Mammary epithelial cell (primary cell): ENCODE measurements at regions of chr17 and their contacts with region 1.

Region 1: GRCh38 chr17:41959336-41960095 is 7.1 kb upstream of the CNP start:
- DNase-seq: peak; percentile 55
- H3K4me3 ChIP-seq: no peak overlapping the region
- H3K27ac ChIP-seq: no peak overlapping the region
- H3K4me1 ChIP-seq: peaks cover 10% of the 10 kb centered on the region
- H3K27me3 ChIP-seq: no peaks in the 10 kb centered on the region
- CTCF ChIP-seq: peak; percentile 50 to 65

Region 2: DNA sequence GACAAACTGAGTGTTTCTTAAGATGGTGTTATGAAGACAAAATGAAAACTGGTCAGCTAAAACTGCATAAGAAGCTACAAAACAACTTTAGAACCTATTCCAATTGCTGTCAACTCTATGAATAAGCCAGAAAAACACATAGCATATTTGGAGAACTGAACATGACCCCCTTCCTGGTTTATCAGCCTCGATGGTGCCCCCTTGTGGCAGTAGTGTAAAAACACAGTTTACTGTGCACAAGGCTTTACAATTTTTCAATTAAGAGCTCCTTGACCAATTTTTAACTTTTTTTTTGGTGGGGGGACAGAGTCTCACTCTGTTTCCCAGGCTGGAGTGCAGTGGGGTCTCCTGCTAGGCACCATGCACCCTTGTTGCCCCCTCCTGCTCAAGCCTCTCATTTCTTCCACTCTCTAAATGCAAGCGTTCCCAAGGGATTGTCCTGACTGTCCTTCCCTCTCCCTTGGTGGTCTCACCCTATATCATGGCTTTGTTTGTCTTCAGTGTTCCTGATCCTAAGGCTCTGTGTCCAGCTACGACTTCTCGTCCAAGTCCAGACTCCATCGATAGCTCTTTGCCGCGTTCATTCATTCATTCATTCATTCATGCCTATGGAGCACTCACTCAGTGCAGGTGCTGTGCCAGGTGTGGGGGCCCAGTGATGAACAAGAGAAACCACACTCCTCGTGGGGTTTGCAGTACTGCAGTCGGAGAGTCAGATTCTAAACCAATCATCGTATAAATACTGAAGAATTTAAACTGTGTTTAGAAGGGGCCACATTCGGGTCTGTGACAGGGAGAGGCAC is 263.4 kb before region 1 on chr17:
- CTCF ChIA-PET with region 1: interaction called, 10 read pairs
- dilution Hi-C with region 1: no loop called
- in situ Hi-C with region 1: no loop called
- intact Hi-C with region 1: no loop called
- DNase-seq: peak; percentile 58
- H3K4me3 ChIP-seq: no peak overlapping the region
- H3K27ac ChIP-seq: no peak overlapping the region
- H3K4me1 ChIP-seq: peaks cover 2% of the 10 kb centered on the region
- H3K27me3 ChIP-seq: no peaks in the 10 kb centered on the region
- CTCF ChIP-seq: peak; percentile 80 to 89

Region 3: GRCh38 chr17:41717408-41718286 is 241.9 kb before region 1 on chr17:
- CTCF ChIA-PET with region 1: no interaction called
- dilution Hi-C with region 1: loop called (anchors 5 kb)
- in situ Hi-C with region 1: no loop called
- intact Hi-C with region 1: no loop called
- DNase-seq: peak; percentile 85
- H3K4me3 ChIP-seq: peak overlapping the region in 2 of 3 experiments; percentile 2 to 6
- H3K27ac ChIP-seq: peak overlapping the region; percentile 67
- H3K4me1 ChIP-seq: peaks cover 16% of the 10 kb centered on the region
- H3K27me3 ChIP-seq: no peaks in the 10 kb centered on the region
- CTCF ChIP-seq: no peak

Region 4: DNA sequence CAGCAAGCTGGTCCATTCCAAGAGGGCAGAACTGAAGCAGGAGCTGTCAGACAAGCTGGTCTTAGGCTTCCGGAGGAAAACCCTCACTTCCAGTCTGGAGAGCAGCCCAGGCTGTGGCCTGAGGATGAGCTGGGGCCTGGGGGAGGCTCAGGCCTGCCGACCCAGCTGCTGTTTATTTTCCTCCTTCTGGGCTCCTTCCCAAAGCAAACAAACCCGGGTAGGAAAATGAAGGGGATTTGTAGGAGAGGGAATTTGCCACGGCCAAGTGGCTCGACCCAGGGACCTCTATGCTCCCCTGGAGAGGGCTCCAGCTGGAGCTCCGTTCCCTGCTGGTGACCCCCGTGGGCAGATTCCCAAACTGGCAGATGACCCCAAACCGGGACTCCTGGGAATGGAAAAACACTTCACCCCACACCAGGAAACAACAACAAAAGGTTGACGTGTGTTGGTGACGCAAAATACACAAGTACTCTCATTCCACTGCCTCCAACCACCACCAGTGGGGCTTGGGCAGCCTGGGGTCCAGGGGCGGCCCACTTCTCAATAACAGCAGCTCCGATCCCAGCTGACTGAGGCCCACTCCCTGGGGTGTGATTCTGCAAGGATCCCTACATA is 181.8 kb before region 1 on chr17:
- CTCF ChIA-PET with region 1: no interaction called
- dilution Hi-C with region 1: no loop called
- in situ Hi-C with region 1: no loop called
- intact Hi-C with region 1: no loop called
- DNase-seq: peak; percentile 65
- H3K4me3 ChIP-seq: no peak overlapping the region
- H3K27ac ChIP-seq: peak overlapping the region; percentile 37
- H3K4me1 ChIP-seq: peaks cover 61% of the 10 kb centered on the region
- H3K27me3 ChIP-seq: no peaks in the 10 kb centered on the region
- CTCF ChIP-seq: no peak

Region 5: DNA sequence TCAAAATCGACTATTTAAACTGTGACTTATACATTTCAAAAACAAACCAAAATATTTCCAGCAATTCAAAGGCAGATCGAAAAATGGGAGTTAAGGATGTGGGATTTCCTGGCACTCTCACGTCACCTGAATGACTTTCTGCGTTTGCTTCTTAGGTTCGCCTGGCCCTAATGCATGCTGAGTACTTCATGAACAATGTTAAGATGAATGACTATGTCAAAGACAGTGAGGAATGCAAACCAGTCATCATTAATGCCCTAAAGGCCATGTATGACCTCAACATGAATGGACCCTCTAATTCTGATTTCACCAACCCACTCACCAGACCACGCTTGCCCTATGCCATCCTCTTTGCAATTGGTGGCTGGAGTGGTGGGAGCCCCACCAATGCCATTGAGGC is 114.5 kb before region 1 on chr17:
- CTCF ChIA-PET with region 1: no interaction called
- dilution Hi-C with region 1: loop called (anchors 5 kb)
- in situ Hi-C with region 1: no loop called
- intact Hi-C with region 1: no loop called
- DNase-seq: no peak
- H3K4me3 ChIP-seq: no peak overlapping the region
- H3K27ac ChIP-seq: no peak overlapping the region
- H3K4me1 ChIP-seq: no peaks in the 10 kb centered on the region
- H3K27me3 ChIP-seq: no peaks in the 10 kb centered on the region
- CTCF ChIP-seq: no peak

Region 6: GRCh38 chr17:41894791-41895331 is 64.7 kb before region 1 on chr17:
- CTCF ChIA-PET with region 1: no interaction called
- dilution Hi-C with region 1: loop called (anchors 5 kb)
- in situ Hi-C with region 1: no loop called
- intact Hi-C with region 1: loop called (anchors 10 kb)
- DNase-seq: no peak
- H3K4me3 ChIP-seq: no peak overlapping the region
- H3K27ac ChIP-seq: no peak overlapping the region
- H3K4me1 ChIP-seq: no peaks in the 10 kb centered on the region
- H3K27me3 ChIP-seq: no peaks in the 10 kb centered on the region
- CTCF ChIP-seq: no peak

Region 7: DNA sequence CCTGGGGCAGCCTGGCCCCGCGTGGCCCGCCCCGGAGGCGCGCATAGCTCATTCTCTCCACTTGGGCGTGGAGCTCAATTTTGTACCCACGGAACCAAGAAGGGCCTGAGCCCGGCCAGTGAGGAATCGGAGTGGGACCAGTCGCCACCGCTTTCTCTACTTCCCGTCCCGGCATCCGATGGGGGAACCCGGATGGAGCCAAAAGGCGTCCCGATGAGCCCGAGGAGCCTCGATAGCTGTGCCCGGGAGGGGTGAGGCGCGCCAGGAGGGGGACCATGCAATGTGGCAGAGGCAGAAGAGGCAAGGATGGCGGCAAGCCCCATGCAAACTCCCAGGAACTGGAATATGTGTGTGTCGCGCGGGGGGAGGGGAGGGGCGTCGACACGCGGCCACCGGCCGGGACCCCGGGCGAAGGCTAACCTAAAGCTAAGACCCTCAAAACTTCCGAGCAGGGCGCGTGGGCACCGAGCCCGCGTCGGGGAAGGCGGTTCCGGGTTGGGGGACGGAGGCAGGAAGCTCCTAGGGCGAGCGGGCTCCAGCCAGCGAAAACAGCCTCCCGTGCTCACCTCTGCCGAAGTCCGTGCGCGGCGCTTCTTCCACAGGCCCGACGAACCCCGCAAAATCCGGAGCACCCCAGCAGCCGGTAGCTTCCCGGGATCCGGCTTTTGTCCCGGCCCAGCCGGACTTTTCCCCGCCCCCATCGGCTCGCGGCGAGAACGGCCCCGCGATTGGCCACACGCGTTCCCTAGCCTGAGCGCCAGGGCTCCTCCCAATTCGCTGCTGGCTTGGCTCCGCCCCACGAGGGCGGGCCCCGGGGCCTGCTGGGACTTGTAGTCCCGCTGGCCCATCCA is 41.0 kb before region 1 on chr17 and contains the start of gene ACLY:
- CTCF ChIA-PET with region 1: interaction called, 4 read pairs
- dilution Hi-C with region 1: no loop called
- in situ Hi-C with region 1: no loop called
- intact Hi-C with region 1: loop called (anchors 1 kb)
- DNase-seq: peak; percentile 97
- H3K4me3 ChIP-seq: peak within 1 kb of the TSS; percentile 83 to 96 (median 87)
- H3K27ac ChIP-seq: peak within 1 kb of the TSS; percentile 62
- H3K4me1 ChIP-seq: peaks cover 37% of the 10 kb centered on the region
- H3K27me3 ChIP-seq: no peaks in the 10 kb centered on the region
- CTCF ChIP-seq: no peak
- total RNA-seq, gene ACLY: 251 to 387 TPM

Region 8: GRCh38 chr17:41930009-41930832 is 29.3 kb before region 1 on chr17 and contains the start of gene ODAD4:
- CTCF ChIA-PET with region 1: no interaction called
- dilution Hi-C with region 1: no loop called
- in situ Hi-C with region 1: no loop called
- intact Hi-C with region 1: loop called (anchors 1 kb)
- DNase-seq: peak; percentile 98
- H3K4me3 ChIP-seq: peak within 1 kb of the TSS; percentile 50 to 66 (median 60)
- H3K27ac ChIP-seq: peak within 1 kb of the TSS; percentile 79
- H3K4me1 ChIP-seq: peaks cover 10% of the 10 kb centered on the region
- H3K27me3 ChIP-seq: no peaks in the 10 kb centered on the region
- CTCF ChIP-seq: peak; percentile 45 to 56
- total RNA-seq, gene ODAD4: 0.83 to 1.9 TPM